PC-9 (cell line): ENCODE measurements at regions of chr3 and their contacts with region 1.

Region 1: GRCh38 chr3:113838631-113839209 is at the start of gene GRAMD1C:
- DNase-seq: peak; percentile 72 to 85
- H3K4me3 ChIP-seq: peak within 1 kb of the TSS; percentile 64; the same call in 1 of the 2 replicates
- H3K27ac ChIP-seq: no peak within 1 kb of the TSS
- H3K4me1 ChIP-seq: peaks cover 14% of the 10 kb centered on the region
- H3K27me3 ChIP-seq: no peaks in the 10 kb centered on the region
- CTCF ChIP-seq: peak; percentile 86
- total RNA-seq, gene GRAMD1C: 14.7 and 15.7 TPM in 2 replicates

Region 2: DNA sequence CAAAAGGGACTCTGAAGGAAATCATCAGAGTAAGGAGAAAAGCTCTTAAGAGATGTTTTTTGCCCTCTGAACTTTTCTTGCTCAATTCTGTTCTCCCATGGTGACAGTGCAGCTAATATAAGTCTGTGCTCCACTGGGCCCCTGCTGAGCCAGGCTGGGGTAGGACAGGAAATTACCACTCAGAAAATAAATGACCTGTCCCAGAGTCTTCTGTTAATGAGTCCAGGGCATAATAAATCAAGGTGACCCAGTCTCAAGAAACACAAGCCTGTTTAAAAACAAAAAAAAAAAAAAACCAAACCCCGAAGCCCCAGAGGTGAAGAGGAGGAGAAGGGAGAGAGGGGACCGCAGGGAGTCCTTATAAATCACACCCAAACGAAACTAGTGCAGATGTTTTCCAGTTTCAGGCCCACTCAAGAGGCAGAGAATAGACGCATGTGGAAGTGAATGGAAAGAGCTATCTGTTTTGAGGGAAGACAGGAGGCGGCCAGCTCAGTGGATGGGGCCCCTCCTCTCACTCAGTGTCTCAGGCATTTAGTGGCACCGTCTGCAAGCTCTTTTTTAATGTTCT is 687.2 kb before region 1 on chr3:
- CTCF ChIA-PET with region 1: interaction called, 11 read pairs
- POLR2A ChIA-PET with region 1: no interaction called
- intact Hi-C with region 1: no loop called
- DNase-seq: no peak
- H3K4me3 ChIP-seq: no peak overlapping the region
- H3K27ac ChIP-seq: no peak overlapping the region
- H3K4me1 ChIP-seq: peaks cover 17% of the 10 kb centered on the region
- H3K27me3 ChIP-seq: no peaks in the 10 kb centered on the region
- CTCF ChIP-seq: no peak

Region 3: GRCh38 chr3:113736548-113737089 is 102.1 kb before region 1 on chr3:
- CTCF ChIA-PET with region 1: interaction called, 8 read pairs
- POLR2A ChIA-PET with region 1: no interaction called
- intact Hi-C with region 1: loop called (anchors 2 kb)
- DNase-seq: peak; percentile 15 to 38
- H3K4me3 ChIP-seq: no peak overlapping the region
- H3K27ac ChIP-seq: peak overlapping the region; percentile 20; the same call in 1 of the 2 replicates
- H3K4me1 ChIP-seq: peaks cover 19% of the 10 kb centered on the region; the same call in 1 of the 2 replicates
- H3K27me3 ChIP-seq: no peaks in the 10 kb centered on the region
- CTCF ChIP-seq: peak; percentile 79

Region 4: DNA sequence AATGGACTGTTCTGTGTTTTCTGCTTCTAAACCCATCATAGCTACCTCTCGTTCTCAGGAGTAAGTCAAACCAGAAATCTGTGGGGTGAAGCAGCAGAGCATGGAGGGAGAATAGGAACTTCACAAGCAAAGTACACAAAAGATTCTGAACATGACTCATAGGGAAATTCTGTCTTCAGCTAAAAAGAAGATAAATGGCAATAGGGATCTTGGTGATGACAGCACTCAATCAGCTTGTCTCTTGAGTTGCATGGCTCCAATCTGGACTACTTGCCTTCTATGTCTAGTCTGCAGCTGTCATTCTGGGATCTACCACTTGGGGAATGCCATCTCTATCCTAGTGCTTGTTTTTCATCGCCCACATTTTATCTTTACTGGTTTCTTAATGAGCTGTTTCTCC is 13.6 kb before region 1 on chr3:
- CTCF ChIA-PET with region 1: no interaction called
- POLR2A ChIA-PET with region 1: interaction called, 21 read pairs
- intact Hi-C with region 1: no loop called
- DNase-seq: peak in 1 of 2 experiments; percentile 43
- H3K4me3 ChIP-seq: no peak overlapping the region
- H3K27ac ChIP-seq: no peak overlapping the region
- H3K4me1 ChIP-seq: peaks cover 6% of the 10 kb centered on the region
- H3K27me3 ChIP-seq: no peaks in the 10 kb centered on the region
- CTCF ChIP-seq: no peak

Region 5: DNA sequence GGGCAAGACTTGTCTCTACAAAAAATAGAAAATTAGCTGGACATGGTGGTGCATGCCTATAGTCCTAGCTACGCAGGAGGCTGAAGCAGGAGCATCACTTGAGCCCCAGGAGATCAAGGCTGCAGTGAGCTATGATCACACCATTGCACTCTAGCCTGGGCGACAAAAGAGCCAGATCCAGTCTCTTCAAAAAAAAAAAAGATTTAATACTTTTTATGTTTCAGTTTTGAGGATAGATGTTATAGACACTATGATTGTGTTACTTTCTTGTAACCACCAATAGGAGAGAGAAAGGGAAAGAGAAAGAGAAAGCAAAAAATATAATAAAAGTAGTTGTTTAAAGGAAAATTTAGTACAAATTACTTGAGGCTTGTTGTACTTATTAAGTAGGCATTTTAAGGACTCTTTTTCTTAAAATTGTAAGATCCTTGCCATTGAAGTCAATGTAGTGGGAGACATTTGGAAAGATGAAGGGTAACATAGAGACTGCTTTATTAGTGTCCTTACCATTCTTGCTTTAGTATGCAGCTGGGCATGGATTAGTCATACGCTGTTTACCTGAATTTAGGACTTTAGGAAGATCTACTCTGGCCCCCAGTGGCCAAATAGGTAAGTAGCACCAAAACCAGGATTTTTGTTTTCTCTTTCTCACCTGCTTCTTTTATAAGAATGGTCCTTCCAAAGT is 74.0 kb after region 1 on chr3:
- CTCF ChIA-PET with region 1: interaction called, 12 read pairs
- POLR2A ChIA-PET with region 1: interaction called, 10 read pairs
- intact Hi-C with region 1: loop called (anchors 1 kb)
- DNase-seq: peak; percentile 48 to 77
- H3K4me3 ChIP-seq: no peak overlapping the region
- H3K27ac ChIP-seq: no peak overlapping the region
- H3K4me1 ChIP-seq: peaks cover 4% of the 10 kb centered on the region; the same call in 1 of the 2 replicates
- H3K27me3 ChIP-seq: no peaks in the 10 kb centered on the region
- CTCF ChIP-seq: peak; percentile 84

Region 6: DNA sequence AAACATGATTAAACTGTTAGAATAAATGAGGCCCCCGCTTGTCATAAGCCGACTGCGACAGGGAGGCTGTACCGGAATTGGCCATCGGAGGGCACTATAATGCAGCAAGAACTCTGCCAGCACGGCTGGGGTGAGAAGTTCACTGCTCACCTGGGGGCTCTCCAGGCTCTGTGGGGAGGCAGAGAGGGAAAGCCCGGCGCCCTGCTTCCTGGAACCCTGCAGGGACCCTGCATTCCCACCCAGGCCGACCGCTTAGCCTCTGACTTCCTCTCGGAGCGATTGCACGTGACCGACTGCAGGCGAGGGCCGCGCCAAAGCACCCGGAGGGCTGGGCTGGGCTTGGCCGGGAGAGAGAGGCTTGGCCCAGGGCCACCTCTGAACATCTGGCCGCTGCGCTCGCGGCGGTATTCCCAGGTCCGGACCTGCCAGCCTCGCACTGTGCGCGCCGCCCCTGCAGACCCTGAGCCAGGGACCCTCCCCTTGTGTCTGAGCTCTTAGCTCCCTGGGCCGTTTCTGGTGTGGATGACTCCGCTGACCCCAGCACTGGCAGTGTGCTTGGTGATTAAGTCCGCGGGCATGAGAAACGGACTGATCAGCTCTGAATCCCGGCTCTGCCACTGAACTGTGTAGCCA is 313.9 kb after region 1 on chr3:
- CTCF ChIA-PET with region 1: no interaction called
- POLR2A ChIA-PET with region 1: no interaction called
- intact Hi-C with region 1: loop called (anchors 10 kb)
- DNase-seq: peak; percentile 60 to 85
- H3K4me3 ChIP-seq: peak overlapping the region; percentile 61
- H3K27ac ChIP-seq: no peak overlapping the region
- H3K4me1 ChIP-seq: peaks cover 9% of the 10 kb centered on the region; the same call in 1 of the 2 replicates
- H3K27me3 ChIP-seq: no peaks in the 10 kb centered on the region
- CTCF ChIP-seq: peak; percentile 91